IMR-90 (cell line): ENCODE measurements at regions of chr21 and their contacts with region 1.

Region 1: DNA sequence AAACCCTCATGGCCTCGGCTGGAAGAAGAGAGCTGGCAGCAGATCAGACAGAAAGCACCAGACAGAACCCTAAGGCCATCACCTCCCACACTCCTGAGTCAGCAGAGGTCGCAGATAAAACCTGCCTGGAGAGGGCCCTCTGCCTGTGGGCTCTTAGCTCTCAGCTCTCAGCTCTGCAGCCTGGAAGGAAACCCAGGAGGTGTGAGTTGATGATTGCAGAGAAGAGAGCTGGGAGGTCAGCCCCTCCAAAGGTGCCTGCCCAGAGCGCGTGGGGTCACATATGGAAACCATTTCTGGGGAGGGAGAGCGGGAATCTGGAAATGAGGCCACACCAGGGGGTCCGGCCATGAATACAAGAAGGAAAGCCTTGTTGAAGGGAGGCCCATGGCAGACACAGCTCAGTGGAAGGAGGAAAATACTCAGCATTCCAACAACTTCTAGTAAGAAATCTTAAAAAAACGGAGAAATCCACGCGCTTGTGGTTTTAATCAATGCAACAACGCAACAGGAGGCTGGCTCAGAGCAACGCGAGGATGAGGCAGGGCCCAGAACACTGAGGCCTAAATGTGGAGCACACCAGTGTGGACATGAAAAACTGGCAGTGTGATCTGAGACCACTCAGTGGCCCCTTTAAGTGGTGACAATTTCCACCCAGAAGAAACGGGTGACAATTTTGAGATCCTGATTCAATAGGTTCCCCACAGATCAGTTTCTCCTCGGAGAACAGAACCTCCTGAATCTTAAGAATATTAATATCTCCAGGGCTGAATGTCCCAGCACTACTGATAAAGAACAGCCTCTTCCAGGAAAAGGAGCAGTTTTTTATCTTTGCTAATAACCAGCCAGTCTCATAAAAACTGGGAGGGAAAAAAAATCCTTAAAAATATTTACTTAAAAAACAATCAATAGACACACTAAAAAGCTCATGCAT is 45.7 kb downstream of the PSMG1 start:
- DNase-seq: peak; percentile 24
- ATAC-seq: no peak
- H3K4me3 ChIP-seq: no peak overlapping the region
- H3K27ac ChIP-seq: no peak overlapping the region
- H3K4me1 ChIP-seq: peaks cover 7% of the 10 kb centered on the region; the same call in 1 of the 2 replicates
- H3K27me3 ChIP-seq: peaks cover 19% of the 10 kb centered on the region
- CTCF ChIP-seq: peak; percentile 16; the same call in 1 of the 2 replicates
- POLR2A ChIP-seq: no peak
- RAD21 ChIP-seq: no peak

Region 2: GRCh38 chr21:38380481-38381137 is 756.9 kb before region 1 on chr21:
- CTCF ChIA-PET with region 1: no interaction called
- POLR2A ChIA-PET with region 1: no interaction called
- dilution Hi-C with region 1: no loop called
- in situ Hi-C with region 1: no loop called
- intact Hi-C with region 1: loop called (anchors 5 kb)
- DNase-seq: peak; percentile 8
- ATAC-seq: peak; percentile 68
- H3K4me3 ChIP-seq: no peak overlapping the region
- H3K27ac ChIP-seq: no peak overlapping the region
- H3K4me1 ChIP-seq: no peaks in the 10 kb centered on the region
- H3K27me3 ChIP-seq: peaks cover 20% of the 10 kb centered on the region
- CTCF ChIP-seq: peak; percentile 32; the same call in 1 of the 2 replicates
- POLR2A ChIP-seq: no peak
- RAD21 ChIP-seq: no peak

Region 3: DNA sequence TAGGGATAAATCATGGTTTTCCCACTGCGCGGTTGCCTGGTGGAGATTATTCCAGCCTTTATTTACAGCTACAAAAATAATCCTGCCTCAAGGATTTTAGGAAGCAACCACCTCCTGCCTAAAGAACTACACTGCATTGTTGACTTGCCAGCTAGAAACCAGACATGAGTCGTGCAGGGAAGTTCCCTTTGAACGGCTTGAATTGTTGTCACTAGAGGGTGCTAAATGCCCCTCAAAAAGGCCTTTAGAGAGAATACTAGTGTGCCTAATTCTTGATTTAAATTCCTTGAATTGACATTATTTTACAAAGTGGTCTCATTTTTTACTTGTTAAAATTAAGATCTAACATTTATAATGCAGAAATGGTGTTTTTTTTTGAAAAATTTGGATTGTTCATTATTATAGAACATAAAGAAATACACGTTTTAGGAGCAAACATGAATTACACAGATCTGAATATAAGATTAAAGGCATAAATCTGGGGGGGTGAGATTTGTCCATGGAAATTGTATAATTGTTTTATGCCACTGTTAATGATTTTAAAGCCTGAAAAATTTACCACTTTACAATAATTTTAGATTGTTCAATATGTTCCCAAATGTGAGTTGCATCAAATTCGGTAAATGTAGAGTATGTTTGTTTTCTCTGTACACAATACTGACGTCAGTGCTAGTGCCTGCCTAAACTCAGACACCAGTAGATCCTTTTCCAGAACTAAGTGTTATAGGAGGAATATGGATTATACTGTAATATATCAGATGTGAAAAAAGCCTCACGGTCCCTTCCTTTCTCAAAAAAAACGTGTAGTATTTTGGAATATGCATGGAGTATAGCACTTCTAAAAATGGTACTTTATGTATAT is 631.6 kb before region 1 on chr21:
- CTCF ChIA-PET with region 1: interaction called, 4 read pairs
- POLR2A ChIA-PET with region 1: no interaction called
- dilution Hi-C with region 1: no loop called
- in situ Hi-C with region 1: no loop called
- intact Hi-C with region 1: loop called (anchors 1 kb)
- DNase-seq: peak; percentile 71
- ATAC-seq: peak; percentile 96
- H3K4me3 ChIP-seq: no peak overlapping the region
- H3K27ac ChIP-seq: no peak overlapping the region
- H3K4me1 ChIP-seq: no peaks in the 10 kb centered on the region
- H3K27me3 ChIP-seq: peaks cover 24% of the 10 kb centered on the region
- CTCF ChIP-seq: peak; percentile 79
- POLR2A ChIP-seq: no peak
- RAD21 ChIP-seq: peak; percentile 81

Region 4: GRCh38 chr21:38525454-38525853 is 612.1 kb before region 1 on chr21:
- CTCF ChIA-PET with region 1: no interaction called
- POLR2A ChIA-PET with region 1: no interaction called
- dilution Hi-C with region 1: no loop called
- in situ Hi-C with region 1: loop called (anchors 5 kb)
- intact Hi-C with region 1: no loop called
- DNase-seq: no peak
- ATAC-seq: no peak
- H3K4me3 ChIP-seq: no peak overlapping the region
- H3K27ac ChIP-seq: no peak overlapping the region
- H3K4me1 ChIP-seq: no peaks in the 10 kb centered on the region
- H3K27me3 ChIP-seq: peaks cover 27% of the 10 kb centered on the region
- CTCF ChIP-seq: no peak
- POLR2A ChIP-seq: no peak
- RAD21 ChIP-seq: no peak

Region 5: GRCh38 chr21:38669176-38669575 is 468.3 kb before region 1 on chr21:
- CTCF ChIA-PET with region 1: interaction called, 4 read pairs
- POLR2A ChIA-PET with region 1: no interaction called
- dilution Hi-C with region 1: no loop called
- in situ Hi-C with region 1: no loop called
- intact Hi-C with region 1: loop called (anchors 2 kb)
- DNase-seq: peak; percentile 30
- ATAC-seq: 0 out of 2 replicates have a peak, but pooled peaks have one; percentile 29
- H3K4me3 ChIP-seq: no peak overlapping the region
- H3K27ac ChIP-seq: no peak overlapping the region
- H3K4me1 ChIP-seq: no peaks in the 10 kb centered on the region
- H3K27me3 ChIP-seq: peaks cover 82% of the 10 kb centered on the region
- CTCF ChIP-seq: 0 out of 2 replicates have a peak, but pooled peaks have one; percentile 34
- POLR2A ChIP-seq: no peak
- RAD21 ChIP-seq: peak; percentile 40